GM13977 (cell line): ENCODE measurements at regions of chr13 and their contacts with region 1.

Region 1: DNA sequence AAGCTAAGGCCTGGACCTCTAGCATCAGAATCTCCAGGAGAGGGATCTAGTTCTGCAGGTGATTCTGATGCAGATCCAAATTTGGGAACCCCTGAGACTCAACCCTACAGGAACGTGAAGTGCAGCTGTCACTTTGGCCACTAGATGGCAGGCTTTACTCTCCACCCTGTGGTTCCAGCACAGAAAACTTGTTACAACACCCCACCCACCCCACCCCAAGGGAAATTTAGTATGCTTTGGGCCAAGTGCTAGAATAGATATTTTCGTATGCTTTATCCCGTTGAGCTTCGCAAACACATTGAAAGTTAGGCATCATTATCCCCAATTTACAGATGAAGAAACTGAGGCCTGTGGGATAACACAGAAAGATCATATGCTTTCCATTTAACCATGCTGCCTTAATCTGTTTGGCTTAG is 232.0 kb downstream of the B3GLCT start:
- DNase-seq: peak; percentile 31
- CTCF ChIP-seq: peak; percentile 83

Region 2: DNA sequence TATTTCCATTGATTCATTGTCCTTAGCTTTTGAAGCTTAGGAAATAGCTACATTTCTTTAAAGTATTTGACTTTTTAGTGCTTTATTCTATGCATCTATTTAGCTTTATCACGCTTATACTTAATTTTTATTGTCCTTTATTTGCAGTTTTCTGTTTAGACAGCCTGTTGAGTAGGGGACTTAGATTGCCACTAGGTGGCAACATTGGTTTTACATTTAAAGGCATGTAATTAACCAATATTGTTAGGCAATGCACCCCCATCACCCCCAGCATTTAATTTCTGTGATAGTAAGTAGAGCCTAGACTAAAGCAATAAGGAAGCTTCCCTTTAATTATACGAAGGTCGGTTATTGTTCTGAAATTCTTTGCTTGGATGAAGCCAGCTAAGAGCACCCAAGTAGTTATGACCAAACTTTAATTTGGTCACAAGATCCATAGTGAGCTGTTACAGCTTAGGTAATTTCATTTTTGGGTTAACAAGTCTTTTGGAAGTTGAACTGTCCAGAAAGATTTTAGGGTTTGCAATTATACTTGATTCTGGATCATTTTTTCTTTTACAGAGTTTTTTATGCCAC is 195.4 kb before region 1 on chr13:
- in situ Hi-C with region 1: loop called (anchors 25 kb)
- DNase-seq: peak; percentile 28
- CTCF ChIP-seq: peak; percentile 61

Region 3: GRCh38 chr13:31742097-31742734 is 310.5 kb after region 1 on chr13:
- in situ Hi-C with region 1: loop called (anchors 25 kb)
- DNase-seq: peak; percentile 53
- CTCF ChIP-seq: peak; percentile 90

Region 4: GRCh38 chr13:31885994-31886393 is 454.3 kb after region 1 on chr13:
- in situ Hi-C with region 1: no loop called
- DNase-seq: no peak
- CTCF ChIP-seq: no peak